ENCODE measurements at regions of chr1 and their contacts with region 1.

Region 1: GRCh38 chr1:115138968-115139367 is 49.7 kb upstream of the TSPAN2 start:
- DNase-seq: peak; percentile 81 to 89
- H3K4me3 ChIP-seq: no peak overlapping the region
- H3K27ac ChIP-seq: peak overlapping the region; percentile 18; the same call in 1 of the 2 replicates
- H3K4me1 ChIP-seq: peaks cover 49% of the 10 kb centered on the region
- H3K27me3 ChIP-seq: no peaks in the 10 kb centered on the region
- CTCF ChIP-seq: peak; percentile 98

Region 2: DNA sequence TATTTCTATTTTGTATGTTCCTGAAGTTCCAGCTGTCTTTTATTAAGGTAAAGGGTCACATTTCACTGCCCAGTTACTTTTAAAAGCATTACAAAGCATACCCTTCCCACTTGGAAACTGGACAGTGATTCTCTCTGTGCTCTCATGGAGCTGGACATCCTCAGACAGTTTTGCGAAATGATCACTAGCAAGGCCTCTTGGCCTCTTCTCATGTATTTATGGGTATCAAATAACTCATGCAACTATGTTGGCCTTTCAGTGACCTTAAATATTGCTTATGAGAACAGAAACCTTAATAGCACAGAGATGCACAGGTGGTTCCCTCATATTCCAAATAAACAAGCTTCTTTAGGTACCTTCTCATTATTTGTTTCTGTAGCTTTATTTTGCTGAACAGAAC is 435.7 kb before region 1 on chr1:
- CTCF ChIA-PET with region 1: no interaction called
- POLR2A ChIA-PET with region 1: no interaction called
- intact Hi-C with region 1: no loop called
- DNase-seq: no peak
- H3K4me3 ChIP-seq: no peak overlapping the region
- H3K27ac ChIP-seq: no peak overlapping the region
- H3K4me1 ChIP-seq: no peaks in the 10 kb centered on the region
- H3K27me3 ChIP-seq: no peaks in the 10 kb centered on the region
- CTCF ChIP-seq: no peak

Region 3: GRCh38 chr1:115068826-115069572 is 70.0 kb before region 1 on chr1:
- CTCF ChIA-PET with region 1: no interaction called
- POLR2A ChIA-PET with region 1: no interaction called
- intact Hi-C with region 1: loop called (anchors 1 kb)
- DNase-seq: peak; percentile 33 to 37
- H3K4me3 ChIP-seq: no peak overlapping the region
- H3K27ac ChIP-seq: no peak overlapping the region
- H3K4me1 ChIP-seq: peaks cover 31% of the 10 kb centered on the region
- H3K27me3 ChIP-seq: no peaks in the 10 kb centered on the region
- CTCF ChIP-seq: no peak

Region 4: GRCh38 chr1:115179397-115179835 is 40.4 kb after region 1 on chr1:
- CTCF ChIA-PET with region 1: interaction called, 3 read pairs
- POLR2A ChIA-PET with region 1: interaction called, 3 read pairs
- intact Hi-C with region 1: loop called (anchors 1 kb)
- DNase-seq: peak; percentile 92 to 100
- H3K4me3 ChIP-seq: no peak overlapping the region
- H3K27ac ChIP-seq: peak overlapping the region; percentile 89
- H3K4me1 ChIP-seq: peaks cover 57% of the 10 kb centered on the region
- H3K27me3 ChIP-seq: no peaks in the 10 kb centered on the region
- CTCF ChIP-seq: no peak

Region 5: GRCh38 chr1:115198938-115199337 is 60.0 kb after region 1 on chr1:
- CTCF ChIA-PET with region 1: no interaction called
- POLR2A ChIA-PET with region 1: no interaction called
- intact Hi-C with region 1: no loop called
- DNase-seq: no peak
- H3K4me3 ChIP-seq: no peak overlapping the region
- H3K27ac ChIP-seq: no peak overlapping the region
- H3K4me1 ChIP-seq: peaks cover 16% of the 10 kb centered on the region
- H3K27me3 ChIP-seq: no peaks in the 10 kb centered on the region
- CTCF ChIP-seq: no peak

Region 6: GRCh38 chr1:115295904-115296696 is 157.1 kb after region 1 on chr1:
- CTCF ChIA-PET with region 1: no interaction called
- POLR2A ChIA-PET with region 1: no interaction called
- intact Hi-C with region 1: no loop called
- DNase-seq: no peak
- H3K4me3 ChIP-seq: no peak overlapping the region
- H3K27ac ChIP-seq: no peak overlapping the region
- H3K4me1 ChIP-seq: peaks cover 14% of the 10 kb centered on the region
- H3K27me3 ChIP-seq: no peaks in the 10 kb centered on the region
- CTCF ChIP-seq: no peak

Region 7: GRCh38 chr1:115323376-115324004 is 184.5 kb after region 1 on chr1:
- CTCF ChIA-PET with region 1: no interaction called
- POLR2A ChIA-PET with region 1: no interaction called
- intact Hi-C with region 1: loop called (anchors 5 kb)
- DNase-seq: peak in 1 of 2 experiments; percentile 99
- H3K4me3 ChIP-seq: no peak overlapping the region
- H3K27ac ChIP-seq: peak overlapping the region; percentile 69
- H3K4me1 ChIP-seq: peaks cover 63% of the 10 kb centered on the region
- H3K27me3 ChIP-seq: no peaks in the 10 kb centered on the region
- CTCF ChIP-seq: no peak

Region 8: DNA sequence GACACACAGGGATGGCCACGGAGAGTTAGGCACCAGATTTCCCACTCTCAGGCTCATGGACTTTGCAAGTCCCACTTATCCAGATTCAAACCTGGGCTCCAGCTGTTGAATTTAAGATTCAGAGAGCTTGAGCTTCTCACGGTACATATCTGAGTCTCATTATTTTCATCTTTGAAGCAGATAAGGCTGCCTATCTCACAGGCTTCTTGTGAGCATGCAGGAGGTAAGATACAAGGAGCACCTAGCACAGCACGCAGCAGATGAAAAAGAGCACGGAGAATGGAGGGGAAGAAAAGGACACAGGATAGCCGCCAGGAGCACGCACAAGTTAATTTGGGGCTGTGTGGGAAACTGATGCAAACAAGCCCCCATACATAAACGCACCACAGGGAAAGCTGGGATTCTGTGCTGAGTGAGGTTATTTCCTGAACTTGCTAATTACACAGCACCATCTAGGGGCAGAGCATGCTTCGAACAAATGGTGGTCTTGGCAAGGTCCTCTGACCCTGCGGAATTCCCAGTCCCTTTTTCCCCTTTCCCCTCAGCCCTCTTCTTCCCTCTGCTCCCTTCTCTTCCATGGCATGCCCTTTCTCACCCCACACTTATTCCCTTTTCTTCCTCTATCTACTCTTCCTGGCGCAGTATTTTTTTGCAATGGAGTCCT is 368.1 kb after region 1 on chr1:
- CTCF ChIA-PET with region 1: no interaction called
- POLR2A ChIA-PET with region 1: no interaction called
- intact Hi-C with region 1: loop called (anchors 1 kb)
- DNase-seq: peak in 1 of 2 experiments; percentile 17
- H3K4me3 ChIP-seq: no peak overlapping the region
- H3K27ac ChIP-seq: no peak overlapping the region
- H3K4me1 ChIP-seq: peaks cover 16% of the 10 kb centered on the region
- H3K27me3 ChIP-seq: no peaks in the 10 kb centered on the region
- CTCF ChIP-seq: peak; percentile 38

Region 9: DNA sequence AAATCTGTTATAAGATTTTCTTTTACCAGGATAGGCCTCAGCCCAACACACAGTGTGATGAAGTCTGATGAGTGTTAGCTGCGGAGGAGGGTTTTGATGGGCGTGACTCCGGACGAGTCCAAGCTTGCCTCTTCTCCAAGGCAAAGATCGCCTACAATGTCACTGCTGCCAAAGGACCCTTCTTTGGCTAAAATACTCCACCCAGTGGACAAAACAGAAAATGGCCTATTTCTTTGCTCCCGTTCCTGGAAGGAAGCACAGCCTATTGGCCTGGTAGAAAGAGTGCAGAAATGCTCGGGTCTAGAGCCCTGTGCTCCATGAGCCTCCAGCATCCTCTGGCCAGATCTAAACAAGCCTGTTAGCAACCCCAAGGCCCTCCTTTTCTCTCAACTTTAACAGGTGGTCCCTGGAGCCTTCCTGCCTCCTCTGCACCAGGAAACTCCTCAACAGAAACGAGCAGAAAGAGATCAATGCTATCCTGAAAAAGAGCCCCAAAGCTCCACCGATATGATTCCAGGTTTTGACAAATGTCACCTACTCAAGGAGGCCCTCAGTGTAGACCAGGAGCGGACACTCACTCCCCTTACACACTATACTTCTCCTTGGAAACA is 633.0 kb after region 1 on chr1:
- CTCF ChIA-PET with region 1: no interaction called
- POLR2A ChIA-PET with region 1: no interaction called
- intact Hi-C with region 1: loop called (anchors 5 kb)
- DNase-seq: peak; percentile 74 to 82
- H3K4me3 ChIP-seq: peak overlapping the region; percentile 8; the same call in 1 of the 2 replicates
- H3K27ac ChIP-seq: no peak overlapping the region
- H3K4me1 ChIP-seq: peaks cover 7% of the 10 kb centered on the region
- H3K27me3 ChIP-seq: no peaks in the 10 kb centered on the region
- CTCF ChIP-seq: peak; percentile 95